Activated CD4-positive, alpha-beta T cell treated with anti-CD3 and anti-CD28 coated beads for 36 hours (primary cell): ENCODE measurements at regions of chr3 and their contacts with region 1.

Region 1: DNA sequence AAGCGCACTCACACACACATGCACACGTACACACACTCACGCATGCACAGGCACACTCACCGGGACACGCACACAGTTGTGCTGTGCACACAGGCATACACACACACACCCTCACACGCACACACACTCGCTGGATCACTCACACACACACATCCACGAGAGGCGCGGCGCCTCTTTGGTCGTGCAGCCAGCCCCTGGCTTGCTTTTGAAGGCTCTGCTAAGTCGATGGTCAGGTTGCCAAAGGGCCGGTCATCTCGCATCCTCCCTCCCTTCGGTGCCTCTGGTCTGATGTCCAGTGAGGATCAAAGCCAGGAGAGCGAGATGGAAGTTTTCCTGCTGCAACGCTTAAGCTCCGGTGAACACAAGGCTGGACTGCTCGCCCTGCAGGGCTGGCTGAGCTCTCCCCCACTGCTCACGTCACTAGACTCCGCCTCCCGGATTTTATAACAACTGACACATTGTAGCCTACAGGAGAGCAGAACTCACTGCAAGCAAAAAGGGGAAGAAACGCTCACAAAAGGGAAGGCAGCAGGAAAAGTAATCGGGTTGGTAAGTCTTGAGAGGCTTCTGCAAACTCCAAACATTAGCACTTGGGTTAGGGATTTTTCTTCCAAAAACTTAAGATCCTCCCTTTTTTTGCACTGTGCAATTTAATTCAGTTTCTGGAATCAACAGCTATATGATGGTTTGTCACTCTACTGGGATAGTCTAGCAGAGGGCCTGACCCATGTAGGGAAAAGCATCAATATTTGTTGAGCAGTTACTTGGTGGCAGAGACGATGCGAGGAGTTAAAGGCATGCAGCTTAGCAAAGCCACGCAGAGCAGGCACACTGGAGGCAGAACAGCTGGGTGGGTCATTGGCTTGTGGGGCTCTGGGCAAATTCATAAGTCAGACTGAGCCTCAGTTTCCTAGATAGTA is at the start of gene SRGAP3:
- DNase-seq: peak; percentile 84
- ATAC-seq: peak; percentile 100
- H3K4me3 Mint-ChIP-seq: peak within 1 kb of the TSS; percentile 72
- H3K27ac Mint-ChIP-seq: peak within 1 kb of the TSS; percentile 23
- H3K4me1 Mint-ChIP-seq: peaks cover 24% of the 10 kb centered on the region
- H3K27me3 Mint-ChIP-seq: peaks cover 8% of the 10 kb centered on the region
- total RNA-seq, gene SRGAP3: 1.2 to 1.5 TPM

Region 2: GRCh38 chr3:8963137-8963869 is 286.2 kb before region 1 on chr3 and contains the start of gene RAD18:
- CTCF ChIA-PET with region 1: interaction called, 3 read pairs
- POLR2A ChIA-PET with region 1: no interaction called
- intact Hi-C with region 1: loop called in 1 of 2 experiments (anchors 1 kb)
- DNase-seq: peak; percentile 95
- ATAC-seq: peak; percentile 94
- H3K4me3 Mint-ChIP-seq: peak within 1 kb of the TSS; percentile 95
- H3K27ac Mint-ChIP-seq: peak within 1 kb of the TSS; percentile 93
- H3K4me1 Mint-ChIP-seq: peaks cover 32% of the 10 kb centered on the region
- H3K27me3 Mint-ChIP-seq: no peaks in the 10 kb centered on the region
- total RNA-seq, gene RAD18: 47.8 to 50.5 TPM

Region 3: GRCh38 chr3:8970971-8971589 is 278.5 kb before region 1 on chr3:
- CTCF ChIA-PET with region 1: interaction called, 3 read pairs
- POLR2A ChIA-PET with region 1: no interaction called
- intact Hi-C with region 1: loop called in 1 of 2 experiments (anchors 2 kb)
- DNase-seq: peak; percentile 81
- ATAC-seq: peak; percentile 80
- H3K4me3 Mint-ChIP-seq: no peak overlapping the region
- H3K27ac Mint-ChIP-seq: no peak overlapping the region
- H3K4me1 Mint-ChIP-seq: peaks cover 2% of the 10 kb centered on the region
- H3K27me3 Mint-ChIP-seq: peaks cover 4% of the 10 kb centered on the region

Region 4: GRCh38 chr3:9168241-9168741 is 81.2 kb before region 1 on chr3:
- CTCF ChIA-PET with region 1: no interaction called
- POLR2A ChIA-PET with region 1: no interaction called
- intact Hi-C with region 1: loop called in 1 of 2 experiments (anchors 1 kb)
- DNase-seq: peak; percentile 82
- ATAC-seq: peak; percentile 94
- H3K4me3 Mint-ChIP-seq: no peak overlapping the region
- H3K27ac Mint-ChIP-seq: peak overlapping the region; percentile 17
- H3K4me1 Mint-ChIP-seq: no peaks in the 10 kb centered on the region
- H3K27me3 Mint-ChIP-seq: no peaks in the 10 kb centered on the region

Region 5: GRCh38 chr3:9384141-9384853 is 134.8 kb after region 1 on chr3:
- CTCF ChIA-PET with region 1: no interaction called
- POLR2A ChIA-PET with region 1: no interaction called
- intact Hi-C with region 1: no loop called
- DNase-seq: no peak
- ATAC-seq: peak; percentile 29
- H3K4me3 Mint-ChIP-seq: no peak overlapping the region
- H3K27ac Mint-ChIP-seq: peak overlapping the region; percentile 40
- H3K4me1 Mint-ChIP-seq: peaks cover 19% of the 10 kb centered on the region
- H3K27me3 Mint-ChIP-seq: no peaks in the 10 kb centered on the region